Activated B cell treated with CpG ODN at 0.5 μM for 24 hours (primary cell): ENCODE measurements at regions of chr2 and their contacts with region 1.

Region 1: DNA sequence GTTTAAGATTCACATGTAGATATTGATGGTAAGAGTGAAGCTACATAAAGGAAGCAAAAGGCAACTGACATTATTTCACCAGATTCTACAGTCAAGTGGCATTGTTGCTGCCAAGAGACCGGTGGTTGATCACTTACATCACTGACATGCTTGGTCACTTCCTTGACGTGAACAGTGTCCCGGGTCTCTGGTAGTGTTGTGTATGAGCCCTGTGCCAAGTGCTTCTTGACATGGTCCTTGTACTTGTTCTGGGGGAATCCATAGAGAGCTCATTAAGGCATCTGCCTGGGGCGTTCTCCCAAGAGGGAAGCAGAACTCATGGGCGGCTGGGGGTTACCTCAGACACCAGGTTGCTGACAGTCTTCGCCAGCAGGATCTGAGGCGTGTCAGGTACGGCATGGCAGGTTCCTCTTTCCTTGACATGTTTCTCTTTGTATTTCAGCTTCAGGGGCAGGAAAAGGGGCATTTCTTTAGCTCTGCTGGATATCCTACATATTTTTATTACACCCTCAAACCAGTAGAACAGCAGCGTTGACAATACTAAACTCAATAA is 116.2 kb downstream of the RIF1 start:
- DNase-seq: peak; percentile 32
- ATAC-seq: peak; percentile 92
- H3K4me3 Mint-ChIP-seq: peak overlapping the region; percentile 70
- H3K27ac Mint-ChIP-seq: peak overlapping the region; percentile 77
- H3K4me1 Mint-ChIP-seq: peaks cover 18% of the 10 kb centered on the region
- H3K27me3 Mint-ChIP-seq: no peaks in the 10 kb centered on the region
- CTCF ChIP-seq: no peak

Region 2: GRCh38 chr2:151486053-151486452 is 39.8 kb before region 1 on chr2:
- CTCF ChIA-PET with region 1: no interaction called
- POLR2A ChIA-PET with region 1: no interaction called
- intact Hi-C with region 1: loop called (anchors 5 kb)
- DNase-seq: no peak
- ATAC-seq: no peak
- H3K4me3 Mint-ChIP-seq: no peak overlapping the region
- H3K27ac Mint-ChIP-seq: peak overlapping the region; percentile 37
- H3K4me1 Mint-ChIP-seq: peaks cover 6% of the 10 kb centered on the region
- H3K27me3 Mint-ChIP-seq: no peaks in the 10 kb centered on the region
- CTCF ChIP-seq: no peak